HCT116 (cell line): ENCODE measurements at regions of chr1 and their contacts with region 1.

Region 1: DNA sequence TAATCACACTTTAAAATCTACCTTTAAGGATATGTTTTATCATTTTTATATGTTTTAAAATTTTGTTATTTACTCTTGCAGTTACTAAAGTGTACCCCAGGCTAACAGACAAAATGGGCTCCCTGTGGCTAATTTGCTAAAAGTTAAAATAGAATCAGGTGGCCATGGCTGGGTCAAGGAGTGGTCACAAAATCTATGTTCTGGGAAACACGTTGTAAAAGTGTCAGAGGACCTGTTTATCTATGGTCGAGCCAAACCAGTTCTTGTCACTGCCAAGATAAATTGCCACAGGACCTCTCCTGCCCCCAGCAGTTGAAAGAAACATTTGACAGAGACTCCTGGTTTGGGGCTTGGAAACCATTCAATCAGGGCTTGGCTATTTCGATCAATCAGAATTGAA is 21.2 kb upstream of the TTLL7 start:
- DNase-seq: no peak
- ATAC-seq: no peak
- H3K4me3 ChIP-seq: no peak overlapping the region
- H3K27ac ChIP-seq: no peak overlapping the region
- H3K4me1 ChIP-seq: peaks cover 3 to 7% of the 10 kb centered on the region in 2 experiments; a peak in 2 of 4 replicates
- H3K27me3 ChIP-seq: no peaks in the 10 kb centered on the region
- CTCF ChIP-seq: no peak
- POLR2A ChIP-seq: no peak
- RAD21 ChIP-seq: no peak

Region 2: DNA sequence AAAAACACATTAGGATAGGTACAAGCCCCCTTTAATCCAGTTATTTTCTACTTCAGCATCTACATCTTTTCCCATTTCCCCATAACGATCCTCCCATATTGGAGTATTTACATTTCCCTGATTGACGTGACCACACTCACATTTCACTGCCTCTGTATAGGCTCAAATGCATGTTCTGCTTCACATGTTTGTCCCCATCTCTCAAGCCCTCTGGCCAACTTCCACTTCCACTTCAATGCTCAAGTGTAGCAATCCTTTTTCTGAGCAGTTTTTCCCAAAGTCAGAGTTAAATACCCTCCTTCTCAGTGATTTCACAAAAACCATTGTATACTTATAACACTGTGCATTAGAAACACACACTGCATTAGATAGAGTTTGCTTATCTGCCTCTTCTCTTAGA is 40.6 kb after region 1 on chr1:
- CTCF ChIA-PET with region 1: no interaction called
- POLR2A ChIA-PET with region 1: no interaction called
- RAD21 ChIA-PET with region 1: no interaction called
- intact Hi-C with region 1: loop called (anchors 5 kb)
- DNase-seq: no peak
- ATAC-seq: no peak
- H3K4me3 ChIP-seq: no peak overlapping the region
- H3K27ac ChIP-seq: no peak overlapping the region
- H3K4me1 ChIP-seq: no peaks in the 10 kb centered on the region
- H3K27me3 ChIP-seq: no peaks in the 10 kb centered on the region
- CTCF ChIP-seq: no peak
- POLR2A ChIP-seq: no peak
- RAD21 ChIP-seq: no peak